ENCODE measurements at regions of chr11 and their contacts with region 1.

Region 1: DNA sequence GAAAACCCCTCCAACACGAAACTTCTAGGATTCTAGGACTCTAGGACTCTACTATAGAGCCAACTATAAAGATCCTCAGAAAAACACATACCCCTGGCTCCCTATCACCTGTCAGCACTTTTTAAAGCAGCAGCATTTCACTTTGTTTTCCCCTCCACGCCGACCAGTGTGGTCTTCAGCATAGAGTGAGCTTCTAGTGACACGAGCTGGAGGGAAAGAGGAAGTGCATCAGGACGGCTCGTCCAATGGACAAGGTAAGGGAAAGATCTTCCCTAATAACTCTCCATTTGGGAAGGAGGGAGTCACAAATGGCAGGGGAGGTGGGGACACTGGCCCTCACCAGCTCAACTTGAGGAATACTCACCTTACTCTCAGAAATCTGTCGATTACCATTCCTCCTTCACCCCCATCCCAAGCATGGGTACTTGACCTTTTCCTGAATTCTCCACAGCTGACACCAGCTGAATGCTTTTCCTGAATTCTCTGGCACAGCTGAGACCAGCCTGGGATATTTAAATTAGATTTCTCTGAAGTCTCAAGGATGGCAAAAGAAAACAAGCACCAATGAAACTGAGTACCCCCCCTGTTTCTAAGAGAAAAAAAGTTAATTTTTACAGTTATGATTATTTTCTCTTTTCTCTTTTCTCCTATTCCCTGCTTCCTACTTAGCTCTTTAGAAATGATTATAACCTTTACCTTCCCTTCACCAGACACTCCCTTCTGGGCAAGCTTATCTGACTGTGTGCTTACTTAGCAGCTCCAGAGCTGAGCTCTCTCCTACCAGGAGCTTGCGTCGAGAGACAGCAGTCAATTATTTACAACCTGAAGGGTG is 33.3 kb upstream of the NNMT start:
- DNase-seq: no peak
- H3K4me3 ChIP-seq: no peak overlapping the region
- H3K27ac ChIP-seq: peak overlapping the region; percentile 42 to 67
- H3K4me1 ChIP-seq: peaks cover 0 to 44% (median 21%) of the 10 kb centered on the region in 4 donors
- H3K27me3 ChIP-seq: no peaks in the 10 kb centered on the region
- CTCF ChIP-seq: peak; percentile 41 to 57

Region 2: DNA sequence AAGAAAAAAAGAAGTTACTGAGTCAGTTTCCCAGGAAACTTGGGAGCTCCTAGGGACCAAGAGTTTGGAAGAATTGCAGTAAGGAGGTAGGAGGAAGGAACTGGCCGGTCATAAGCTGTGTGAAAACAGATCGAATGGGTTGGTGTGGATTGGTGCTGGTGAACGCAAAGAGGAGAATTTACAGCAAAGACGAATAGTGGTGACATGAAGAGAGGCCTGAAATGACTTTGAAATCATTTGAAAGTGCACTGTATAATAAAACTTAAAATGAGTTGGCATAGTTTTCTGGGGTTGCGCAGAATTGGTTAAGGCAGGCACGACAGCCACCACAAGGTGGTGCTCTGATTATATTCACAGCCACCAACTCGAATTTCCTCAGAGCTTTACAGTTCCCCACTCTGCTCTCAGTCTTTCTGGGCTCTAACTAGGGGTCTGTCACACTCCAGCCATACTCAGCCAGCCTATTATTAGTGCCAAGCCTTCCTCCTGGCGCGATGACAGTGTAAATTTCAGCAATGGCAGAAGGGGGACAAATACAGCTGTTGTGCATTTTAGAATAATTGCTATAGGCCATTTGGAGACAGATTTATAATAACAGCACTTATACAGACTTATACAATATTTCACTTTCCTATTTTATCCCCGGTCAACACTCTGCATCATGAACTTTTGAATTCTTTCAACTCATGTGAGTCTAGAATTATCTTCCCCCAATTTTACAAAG is 366.6 kb before region 1 on chr11:
- intact Hi-C with region 1: loop called (anchors 5 kb)
- DNase-seq: peak in 1 of 2 donors; percentile 37
- H3K4me3 ChIP-seq: no peak overlapping the region
- H3K27ac ChIP-seq: no peak overlapping the region
- H3K4me1 ChIP-seq: no peaks in the 10 kb centered on the region
- H3K27me3 ChIP-seq: no peaks in the 10 kb centered on the region
- CTCF ChIP-seq: peak; percentile 61 to 75

Region 3: GRCh38 chr11:113994077-113994954 is 268.6 kb before region 1 on chr11:
- intact Hi-C with region 1: loop called (anchors 5 kb)
- DNase-seq: no peak
- H3K4me3 ChIP-seq: no peak overlapping the region
- H3K27ac ChIP-seq: no peak overlapping the region
- H3K4me1 ChIP-seq: no peaks in the 10 kb centered on the region
- H3K27me3 ChIP-seq: peaks cover 0 to 40% of the 10 kb centered on the region in 2 donors
- CTCF ChIP-seq: peak; percentile 69 to 71

Region 4: DNA sequence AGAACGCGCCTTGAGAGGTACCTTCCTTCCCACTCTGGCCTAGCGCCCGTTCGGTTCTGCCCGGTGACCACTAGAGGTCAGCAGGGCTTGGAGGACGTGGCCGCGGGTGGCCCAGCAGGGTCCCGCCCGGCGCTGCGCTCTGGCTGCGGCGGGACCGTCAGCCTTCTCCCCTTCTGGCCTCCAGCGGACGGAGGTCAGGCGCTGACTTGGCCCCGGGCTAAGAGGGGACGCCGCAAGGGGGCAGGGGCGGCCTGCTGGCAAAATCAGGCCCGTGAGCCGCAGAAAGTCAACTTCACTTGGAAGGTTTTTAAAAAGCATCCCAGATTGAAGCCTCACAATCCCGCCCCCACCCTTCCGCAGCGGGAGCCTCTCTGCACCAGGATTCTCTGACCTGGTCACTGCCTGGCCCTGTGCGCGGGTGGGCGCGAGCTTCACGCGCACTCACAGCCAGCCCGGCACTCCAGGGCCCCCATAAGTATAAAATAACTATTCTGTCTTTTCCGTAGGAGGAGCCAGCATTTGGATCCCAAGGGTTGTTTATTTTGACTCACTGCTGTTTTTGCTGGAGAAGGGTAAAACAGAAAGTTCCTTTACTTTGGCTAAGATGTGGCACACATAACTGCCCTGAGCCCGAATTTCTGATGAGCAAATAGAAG is 226.6 kb before region 1 on chr11:
- intact Hi-C with region 1: loop called (anchors 5 kb)
- DNase-seq: peak; percentile 81 to 91
- H3K4me3 ChIP-seq: peak overlapping the region; percentile 50 to 54
- H3K27ac ChIP-seq: peak overlapping the region; percentile 81 to 87
- H3K4me1 ChIP-seq: peaks cover 0 to 56% (median 29%) of the 10 kb centered on the region in 4 donors
- H3K27me3 ChIP-seq: no peaks in the 10 kb centered on the region
- CTCF ChIP-seq: peak; percentile 84 to 85